ENCODE measurements at regions of chr6 and their contacts with region 1.

Region 1: DNA sequence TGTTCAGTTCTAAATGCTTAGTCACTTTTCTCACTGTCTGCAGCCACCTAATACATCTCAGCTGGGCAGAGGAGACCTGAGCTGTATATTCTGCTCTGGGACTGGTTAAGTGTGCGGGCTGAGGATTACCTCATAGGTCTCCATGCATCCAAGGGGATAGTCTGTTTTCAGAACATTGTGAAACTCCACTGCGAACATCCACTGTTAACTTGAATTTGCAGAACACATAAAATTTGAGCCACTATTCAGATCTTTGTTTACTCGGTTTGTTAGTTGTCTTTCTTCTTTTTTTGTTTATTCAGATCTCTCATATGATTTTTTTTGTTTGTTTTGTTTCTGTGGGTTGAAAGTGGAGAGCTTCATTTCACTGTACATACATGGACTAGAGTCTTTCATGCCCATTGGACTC is 947.1 kb downstream of the TFAP2A start:
- DNase-seq: no peak
- H3K4me3 Mint-ChIP-seq: no peak overlapping the region
- H3K27ac Mint-ChIP-seq: no peak overlapping the region
- H3K4me1 Mint-ChIP-seq: no peaks in the 10 kb centered on the region
- H3K27me3 Mint-ChIP-seq: no peaks in the 10 kb centered on the region

Region 2: GRCh38 chr6:9494864-9495263 is 27.1 kb after region 1 on chr6:
- intact Hi-C with region 1: loop called (anchors 1 kb)
- DNase-seq: no peak
- H3K4me3 Mint-ChIP-seq: no peak overlapping the region
- H3K27ac Mint-ChIP-seq: no peak overlapping the region
- H3K4me1 Mint-ChIP-seq: no peaks in the 10 kb centered on the region
- H3K27me3 Mint-ChIP-seq: no peaks in the 10 kb centered on the region

Measured in activated T-helper 2 cell treated with anti-CD3 and anti-CD28 coated beads, Interferon-gamma antibody, Interleukin-2, Interleukin-4, amounts not matched to agents 10 μg/mL and 5 μg/mL and 100 μg/mL, durations not matched to agents 14 hours and 24 hours and 36 hours (primary cell).